Activated naive CD4-positive, alpha-beta T cell treated with anti-CD3 and anti-CD28 coated beads for 36 hours (primary cell): ENCODE measurements at regions of chr18 and their contacts with region 1.

Region 1: GRCh38 chr18:63320046-63320689 is 599 bp upstream of the BCL2 start:
- DNase-seq: peak; percentile 88
- H3K4me3 Mint-ChIP-seq: peak overlapping the region; percentile 81
- H3K27ac Mint-ChIP-seq: peak overlapping the region; percentile 90
- H3K4me1 Mint-ChIP-seq: peaks cover 24% of the 10 kb centered on the region
- H3K27me3 Mint-ChIP-seq: no peaks in the 10 kb centered on the region

Region 2: GRCh38 chr18:62522504-62523254 is 797.5 kb before region 1 on chr18 and contains the start of gene ZCCHC2:
- CTCF ChIA-PET with region 1: no interaction called
- intact Hi-C with region 1: loop called (anchors 2 kb)
- DNase-seq: peak; percentile 98
- H3K4me3 Mint-ChIP-seq: peak within 1 kb of the TSS; percentile 92
- H3K27ac Mint-ChIP-seq: peak within 1 kb of the TSS; percentile 98
- H3K4me1 Mint-ChIP-seq: peaks cover 14% of the 10 kb centered on the region
- H3K27me3 Mint-ChIP-seq: no peaks in the 10 kb centered on the region
- total RNA-seq, gene ZCCHC2: 22.1 to 23.3 TPM

Region 3: DNA sequence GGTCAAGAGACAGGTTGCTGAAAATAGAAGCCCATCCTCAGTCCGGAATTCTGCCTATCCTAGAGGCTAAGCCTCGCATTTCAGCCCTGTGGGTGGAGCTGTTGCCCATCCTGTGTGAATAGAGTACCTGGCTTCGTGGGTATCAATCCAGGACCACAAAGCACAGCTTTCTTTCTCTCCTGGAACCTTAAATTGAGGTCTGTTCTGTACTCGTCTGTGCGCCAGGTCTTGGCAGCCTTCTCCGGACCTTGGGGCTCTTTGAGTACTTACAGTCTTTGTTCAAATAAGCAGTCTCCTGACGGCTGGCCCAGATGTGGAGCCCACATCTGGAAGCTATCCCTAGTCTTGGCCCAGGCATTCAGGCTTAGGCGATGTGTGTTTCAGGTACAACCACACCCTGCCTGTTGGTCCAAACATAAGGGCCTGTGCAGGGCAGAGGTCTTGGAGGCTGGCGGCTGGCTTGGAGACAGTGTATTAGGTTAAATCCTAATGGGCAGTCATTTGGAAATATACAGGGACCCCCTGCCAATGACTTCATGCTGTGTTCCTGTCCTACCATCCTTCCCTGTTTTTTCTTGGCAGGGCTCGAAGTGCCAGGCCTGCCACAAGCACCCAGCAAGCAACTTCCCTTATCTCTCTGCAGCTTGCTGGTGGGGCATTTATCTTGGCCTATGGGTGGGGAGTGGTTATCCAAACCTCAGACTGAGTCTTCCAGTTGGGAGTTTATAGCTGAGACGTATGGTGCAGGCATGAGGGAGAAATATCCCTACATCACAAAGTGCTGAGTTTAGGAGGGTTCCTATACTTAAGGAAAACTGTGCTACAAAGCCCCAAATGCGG is 294.7 kb before region 1 on chr18:
- CTCF ChIA-PET with region 1: interaction called, 40 read pairs
- intact Hi-C with region 1: loop called (anchors 2 kb)
- DNase-seq: peak; percentile 18
- H3K4me3 Mint-ChIP-seq: no peak overlapping the region
- H3K27ac Mint-ChIP-seq: no peak overlapping the region
- H3K4me1 Mint-ChIP-seq: no peaks in the 10 kb centered on the region
- H3K27me3 Mint-ChIP-seq: no peaks in the 10 kb centered on the region

Region 4: DNA sequence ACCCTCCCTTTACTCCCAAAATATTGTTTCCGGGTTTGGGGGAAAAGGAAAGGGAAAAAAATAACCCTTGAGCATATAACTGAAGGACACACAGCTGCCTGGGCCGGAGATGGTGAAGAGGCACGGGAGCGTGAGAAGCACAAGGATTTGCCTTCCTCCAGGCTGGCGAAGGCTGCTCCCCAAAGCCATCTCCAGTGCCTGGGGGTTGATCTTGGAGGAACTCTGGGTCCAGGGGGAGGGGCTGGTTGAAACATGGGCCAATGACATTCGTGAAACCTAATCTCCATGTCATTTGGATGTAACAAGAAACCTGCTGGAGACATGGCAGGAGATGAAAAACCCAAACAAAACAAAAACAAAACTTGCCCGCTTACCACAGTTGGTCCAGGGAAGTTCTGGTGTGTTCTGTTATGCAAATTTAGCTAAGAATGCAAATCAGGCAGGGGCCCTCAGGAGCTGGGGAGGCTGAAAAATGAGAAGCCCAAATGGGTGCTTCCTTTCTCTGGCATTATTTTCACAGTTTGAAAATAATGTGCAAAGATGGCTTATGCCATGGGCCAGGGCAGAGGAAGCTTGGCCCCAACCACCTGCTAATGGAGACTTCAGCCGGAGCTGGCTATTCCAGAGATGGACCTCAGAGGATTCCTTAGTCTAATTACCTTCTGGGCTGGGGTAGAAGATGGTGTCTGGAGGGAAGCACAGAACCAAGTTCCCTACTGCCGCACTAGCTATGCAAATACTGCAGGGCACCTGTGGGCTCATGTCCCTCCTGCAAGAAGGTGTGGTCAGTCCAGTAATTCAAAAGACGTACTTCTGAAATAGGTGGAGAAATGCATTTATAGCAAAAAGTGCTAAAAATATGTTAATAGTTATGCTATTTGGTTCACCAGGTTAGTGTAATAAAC is 181.5 kb before region 1 on chr18:
- CTCF ChIA-PET with region 1: interaction called, 23 read pairs
- intact Hi-C with region 1: no loop called
- DNase-seq: peak; percentile 65
- H3K4me3 Mint-ChIP-seq: peak overlapping the region; percentile 75
- H3K27ac Mint-ChIP-seq: peak overlapping the region; percentile 82
- H3K4me1 Mint-ChIP-seq: peaks cover 65% of the 10 kb centered on the region
- H3K27me3 Mint-ChIP-seq: no peaks in the 10 kb centered on the region

Region 5: DNA sequence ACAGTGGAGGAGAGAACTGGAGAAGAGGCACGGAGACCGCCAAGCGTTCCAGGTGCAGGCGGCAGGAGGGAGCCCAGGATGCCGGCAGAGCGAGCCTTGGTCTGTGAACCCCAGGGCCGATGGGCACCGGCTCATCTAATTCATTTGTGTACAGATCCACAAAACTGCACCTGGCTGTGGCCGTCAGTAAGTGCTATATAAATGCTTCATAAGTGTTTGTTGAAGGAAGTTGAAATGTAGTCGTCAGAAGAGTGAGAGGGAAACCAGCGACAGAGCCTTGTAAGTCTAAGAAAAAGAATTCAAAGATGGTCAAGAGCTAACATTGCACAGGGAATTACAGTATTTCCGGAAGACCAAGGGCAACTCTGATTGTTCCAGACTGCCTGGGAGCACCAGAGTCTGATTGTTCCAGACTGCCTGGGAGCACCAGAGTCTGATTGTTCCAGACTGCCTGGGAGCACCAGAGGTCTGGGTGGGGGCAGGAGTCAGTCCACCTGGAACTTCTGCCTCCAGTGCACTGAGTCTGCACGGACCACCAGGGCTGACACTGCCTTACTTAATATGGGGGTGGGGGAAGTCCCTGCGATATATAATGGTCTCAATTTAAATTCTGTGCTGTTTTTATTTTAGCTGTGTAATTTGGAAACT is 112.9 kb before region 1 on chr18:
- CTCF ChIA-PET with region 1: interaction called, 21 read pairs
- intact Hi-C with region 1: no loop called
- DNase-seq: peak; percentile 50
- H3K4me3 Mint-ChIP-seq: peak overlapping the region; percentile 71
- H3K27ac Mint-ChIP-seq: peak overlapping the region; percentile 86
- H3K4me1 Mint-ChIP-seq: peaks cover 95% of the 10 kb centered on the region
- H3K27me3 Mint-ChIP-seq: no peaks in the 10 kb centered on the region

Region 6: GRCh38 chr18:63299837-63300745 is 20.1 kb before region 1 on chr18:
- CTCF ChIA-PET with region 1: interaction called, 14 read pairs
- intact Hi-C with region 1: no loop called
- DNase-seq: peak; percentile 72
- H3K4me3 Mint-ChIP-seq: peak overlapping the region; percentile 17
- H3K27ac Mint-ChIP-seq: peak overlapping the region; percentile 86
- H3K4me1 Mint-ChIP-seq: peaks cover 73% of the 10 kb centered on the region
- H3K27me3 Mint-ChIP-seq: no peaks in the 10 kb centered on the region

Region 7: GRCh38 chr18:63422087-63422809 is 102.1 kb after region 1 on chr18 and contains the start of gene VPS4B:
- CTCF ChIA-PET with region 1: no interaction called
- intact Hi-C with region 1: loop called (anchors 1 kb)
- DNase-seq: peak; percentile 100
- H3K4me3 Mint-ChIP-seq: peak within 1 kb of the TSS; percentile 83
- H3K27ac Mint-ChIP-seq: peak within 1 kb of the TSS; percentile 95
- H3K4me1 Mint-ChIP-seq: peaks cover 28% of the 10 kb centered on the region
- H3K27me3 Mint-ChIP-seq: no peaks in the 10 kb centered on the region
- total RNA-seq, gene VPS4B: 28.7 to 30.1 TPM